Activated CD4-positive, alpha-beta T cell treated with anti-CD3 and anti-CD28 coated beads for 36 hours (primary cell): ENCODE measurements at regions of chr9 and their contacts with region 1.

Region 1: GRCh38 chr9:129258124-129258822 is 80.2 kb upstream of the IER5L start:
- DNase-seq: peak; percentile 96
- ATAC-seq: peak; percentile 96
- H3K4me3 Mint-ChIP-seq: peak overlapping the region; percentile 61
- H3K27ac Mint-ChIP-seq: no peak overlapping the region
- H3K4me1 Mint-ChIP-seq: peaks cover 27% of the 10 kb centered on the region
- H3K27me3 Mint-ChIP-seq: peaks cover 15% of the 10 kb centered on the region

Region 2: GRCh38 chr9:129202613-129203555 is 55.4 kb before region 1 on chr9:
- CTCF ChIA-PET with region 1: no interaction called
- POLR2A ChIA-PET with region 1: no interaction called
- intact Hi-C with region 1: loop called in 1 of 2 experiments (anchors 1 kb)
- DNase-seq: peak; percentile 95
- ATAC-seq: peak; percentile 95
- H3K4me3 Mint-ChIP-seq: peak overlapping the region; percentile 57
- H3K27ac Mint-ChIP-seq: peak overlapping the region; percentile 31
- H3K4me1 Mint-ChIP-seq: peaks cover 18% of the 10 kb centered on the region
- H3K27me3 Mint-ChIP-seq: peaks cover 3% of the 10 kb centered on the region

Region 3: DNA sequence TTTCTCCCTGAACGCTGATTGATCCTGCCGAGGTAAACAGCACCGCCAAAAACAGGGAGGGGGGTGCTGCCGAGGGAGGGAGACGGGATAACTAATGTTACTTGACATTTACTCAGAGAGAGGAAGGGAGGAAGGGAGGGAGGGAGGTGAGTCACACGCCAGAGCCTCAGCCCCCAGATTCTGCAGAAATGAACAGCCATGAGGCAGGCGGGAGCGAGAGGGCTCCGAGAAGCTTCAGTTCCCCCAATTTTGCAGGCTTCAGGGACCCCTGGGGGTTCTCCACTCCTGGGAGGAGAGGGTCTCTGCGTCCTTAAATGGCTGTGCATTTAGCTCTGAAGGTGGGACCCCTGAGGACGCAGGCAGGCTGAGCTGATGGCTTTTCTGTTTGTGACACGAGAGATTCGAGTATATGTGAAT is 21.1 kb before region 1 on chr9:
- CTCF ChIA-PET with region 1: interaction called, 3 read pairs
- POLR2A ChIA-PET with region 1: no interaction called
- intact Hi-C with region 1: loop called in 1 of 2 experiments (anchors 1 kb)
- DNase-seq: peak; percentile 84
- ATAC-seq: peak; percentile 80
- H3K4me3 Mint-ChIP-seq: peak overlapping the region; percentile 71
- H3K27ac Mint-ChIP-seq: peak overlapping the region; percentile 94
- H3K4me1 Mint-ChIP-seq: peaks cover 51% of the 10 kb centered on the region
- H3K27me3 Mint-ChIP-seq: no peaks in the 10 kb centered on the region

Region 4: GRCh38 chr9:129460323-129461261 is 202.3 kb after region 1 on chr9:
- CTCF ChIA-PET with region 1: no interaction called
- POLR2A ChIA-PET with region 1: no interaction called
- intact Hi-C with region 1: loop called in 1 of 2 experiments (anchors 1 kb)
- DNase-seq: peak; percentile 96
- ATAC-seq: peak; percentile 87
- H3K4me3 Mint-ChIP-seq: peak overlapping the region; percentile 72
- H3K27ac Mint-ChIP-seq: peak overlapping the region; percentile 92
- H3K4me1 Mint-ChIP-seq: peaks cover 38% of the 10 kb centered on the region
- H3K27me3 Mint-ChIP-seq: no peaks in the 10 kb centered on the region

Region 5: GRCh38 chr9:129495534-129496325 is 237.5 kb after region 1 on chr9:
- CTCF ChIA-PET with region 1: interaction called, 3 read pairs
- POLR2A ChIA-PET with region 1: no interaction called
- intact Hi-C with region 1: loop called in 1 of 2 experiments (anchors 1 kb)
- DNase-seq: peak; percentile 92
- ATAC-seq: peak; percentile 86
- H3K4me3 Mint-ChIP-seq: peak overlapping the region; percentile 74
- H3K27ac Mint-ChIP-seq: peak overlapping the region; percentile 67
- H3K4me1 Mint-ChIP-seq: peaks cover 33% of the 10 kb centered on the region
- H3K27me3 Mint-ChIP-seq: no peaks in the 10 kb centered on the region

Region 6: GRCh38 chr9:130172161-130172857 is 914.0 kb after region 1 on chr9 and contains the start of gene NCS1:
- CTCF ChIA-PET with region 1: no interaction called
- POLR2A ChIA-PET with region 1: no interaction called
- intact Hi-C with region 1: no loop called
- DNase-seq: peak; percentile 74
- ATAC-seq: peak; percentile 70
- H3K4me3 Mint-ChIP-seq: peak within 1 kb of the TSS; percentile 73
- H3K27ac Mint-ChIP-seq: peak within 1 kb of the TSS; percentile 51
- H3K4me1 Mint-ChIP-seq: peaks cover 3% of the 10 kb centered on the region
- H3K27me3 Mint-ChIP-seq: peaks cover 13% of the 10 kb centered on the region
- total RNA-seq, gene NCS1: 24.8 to 25.2 TPM